AG04450 (cell line): ENCODE measurements at regions of chr10 and their contacts with region 1.

Region 1: DNA sequence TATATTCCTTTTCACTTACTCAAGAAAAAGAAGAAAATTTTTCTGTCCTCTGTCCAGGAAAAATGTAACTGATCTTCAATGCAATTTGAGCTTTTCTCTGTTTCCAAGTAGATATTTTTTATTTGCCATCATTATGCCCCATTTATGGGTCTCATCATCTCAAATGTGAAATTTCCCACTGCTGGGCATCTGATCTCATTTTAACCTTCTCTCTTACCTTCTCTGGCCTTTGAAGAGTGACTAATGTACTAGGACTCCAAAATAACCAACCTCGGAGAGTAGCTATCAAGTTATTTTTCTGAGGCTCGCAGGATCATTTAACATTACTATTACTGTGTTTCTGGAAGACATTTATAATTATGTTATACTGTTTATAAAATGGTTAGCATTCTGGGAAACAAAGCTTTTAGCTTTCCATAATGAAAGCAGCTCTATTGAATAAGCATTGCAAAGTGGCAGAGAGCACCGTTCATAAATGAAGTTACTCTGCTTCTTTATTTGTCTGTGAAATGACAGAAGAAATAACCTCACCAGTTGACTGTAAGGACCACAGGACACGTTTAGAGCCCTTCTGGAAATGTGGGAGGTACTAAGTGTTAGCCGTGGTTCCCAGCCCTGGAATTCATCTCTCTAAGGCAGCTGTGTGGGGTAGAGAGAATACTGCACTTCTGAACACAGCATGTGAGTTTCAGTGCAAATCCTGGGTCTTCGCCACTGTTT is 33.3 kb upstream of the NMT2 start:
- DNase-seq: no peak
- H3K4me3 ChIP-seq: peak overlapping the region; percentile 0; the same call in 1 of the 2 replicates
- H3K27ac ChIP-seq: peak overlapping the region; percentile 91
- H3K27me3 ChIP-seq: no peaks in the 10 kb centered on the region
- CTCF ChIP-seq: no peak

Region 2: GRCh38 chr10:14112056-14112455 is 1089.7 kb before region 1 on chr10:
- CTCF ChIA-PET with region 1: interaction called, 11 read pairs
- POLR2A ChIA-PET with region 1: no interaction called
- DNase-seq: no peak
- H3K4me3 ChIP-seq: no peak overlapping the region
- H3K27ac ChIP-seq: no peak overlapping the region
- H3K27me3 ChIP-seq: peaks cover 10% of the 10 kb centered on the region
- CTCF ChIP-seq: no peak

Region 3: GRCh38 chr10:15223174-15223573 is 21.4 kb after region 1 on chr10:
- CTCF ChIA-PET with region 1: no interaction called
- POLR2A ChIA-PET with region 1: no interaction called
- DNase-seq: peak; percentile 77
- H3K4me3 ChIP-seq: no peak overlapping the region
- H3K27ac ChIP-seq: peak overlapping the region; percentile 47
- H3K27me3 ChIP-seq: no peaks in the 10 kb centered on the region
- CTCF ChIP-seq: no peak

Region 4: GRCh38 chr10:15325243-15325943 is 123.6 kb after region 1 on chr10:
- CTCF ChIA-PET with region 1: no interaction called
- POLR2A ChIA-PET with region 1: no interaction called
- DNase-seq: no peak
- H3K4me3 ChIP-seq: no peak overlapping the region
- H3K27ac ChIP-seq: no peak overlapping the region
- H3K27me3 ChIP-seq: no peaks in the 10 kb centered on the region
- CTCF ChIP-seq: no peak